ENCODE measurements at regions of chr5 and their contacts with region 1.

Region 1: DNA sequence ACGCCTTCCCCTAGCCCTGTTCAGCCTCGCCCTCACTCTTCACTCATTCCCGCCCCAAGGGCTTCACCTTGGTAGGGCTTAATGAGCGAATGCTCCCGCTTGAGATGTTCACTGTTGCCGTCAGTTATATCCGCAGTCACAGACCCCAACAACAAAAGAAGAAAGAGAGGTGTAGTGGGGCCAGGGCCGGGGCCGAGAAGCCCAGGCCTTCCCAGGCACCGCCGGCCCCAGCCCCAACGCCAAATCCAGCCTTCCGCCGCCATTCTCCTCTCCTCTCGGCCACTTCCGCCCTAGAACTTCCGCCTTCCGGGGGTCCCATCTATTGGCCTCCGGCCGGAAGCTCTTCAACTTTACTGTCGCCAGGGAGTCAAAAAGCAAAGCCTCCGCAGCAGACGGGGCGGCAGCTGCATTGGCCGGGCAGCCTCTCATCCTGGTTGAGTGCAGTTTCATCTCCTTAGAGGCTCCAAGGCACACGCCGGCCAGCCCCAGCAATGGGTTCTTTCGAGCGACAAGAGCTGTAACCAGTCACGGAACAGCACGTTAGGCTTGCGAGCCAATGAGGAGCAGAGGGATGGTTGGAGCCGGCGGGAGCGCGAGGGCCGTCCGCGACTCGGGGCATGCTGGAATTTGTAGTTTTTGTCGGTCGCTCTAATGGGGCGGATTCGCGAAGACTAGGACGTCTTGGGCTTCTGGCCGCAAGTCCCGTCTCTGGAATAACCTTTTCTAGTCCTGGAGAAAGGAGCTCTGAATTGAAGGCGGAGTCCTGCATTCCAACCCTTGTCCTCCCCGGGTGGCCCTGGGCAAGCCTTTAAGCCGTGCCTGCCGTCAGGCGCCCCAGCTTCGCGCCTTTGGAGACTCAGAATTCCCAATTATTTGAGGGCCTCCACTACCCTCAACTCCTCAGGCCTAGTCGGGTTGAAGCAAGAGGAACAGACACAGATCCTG is at the start of gene LMAN2:
- DNase-seq: peak; percentile 93 to 95 (median 94)
- H3K4me3 ChIP-seq: peak within 1 kb of the TSS; percentile 91 to 99
- H3K4me3 Mint-ChIP-seq: peak within 1 kb of the TSS; percentile 91 to 100 (median 97)
- H3K27ac ChIP-seq: peak within 1 kb of the TSS; percentile 93
- H3K27ac Mint-ChIP-seq: peak within 1 kb of the TSS; percentile 97 to 100 (median 99)
- H3K4me1 ChIP-seq: peaks cover 62% of the 10 kb centered on the region
- H3K4me1 Mint-ChIP-seq: peaks cover 42 to 81% (median 63%) of the 10 kb centered on the region in 4 donors
- H3K27me3 ChIP-seq: no peaks in the 10 kb centered on the region
- H3K27me3 Mint-ChIP-seq: no peaks in the 10 kb centered on the region
- total RNA-seq, gene LMAN2: 114 to 123 TPM

Region 2: GRCh38 chr5:177133091-177133852 is 218.4 kb before region 1 on chr5 and contains the start of gene NSD1:
- CTCF ChIA-PET with region 1: no interaction called
- POLR2A ChIA-PET with region 1: interaction called, 8 read pairs
- intact Hi-C with region 1: loop called (anchors 1 kb)
- DNase-seq: peak; percentile 90 to 93 (median 92)
- H3K4me3 ChIP-seq: peak within 1 kb of the TSS; percentile 20 to 67
- H3K4me3 Mint-ChIP-seq: peak within 1 kb of the TSS; percentile 85 to 90 (median 87)
- H3K27ac ChIP-seq: peak within 1 kb of the TSS; percentile 66
- H3K27ac Mint-ChIP-seq: peak within 1 kb of the TSS; percentile 82 to 94 (median 92)
- H3K4me1 ChIP-seq: peaks cover 63% of the 10 kb centered on the region
- H3K4me1 Mint-ChIP-seq: peaks cover 36 to 73% (median 52%) of the 10 kb centered on the region in 4 donors
- H3K27me3 ChIP-seq: no peaks in the 10 kb centered on the region
- H3K27me3 Mint-ChIP-seq: no peaks in the 10 kb centered on the region
- total RNA-seq, gene NSD1: 116 to 122 TPM

Region 3: GRCh38 chr5:177311723-177312648 is 39.7 kb before region 1 on chr5 and contains the start of gene MXD3:
- CTCF ChIA-PET with region 1: interaction called, 11 read pairs
- POLR2A ChIA-PET with region 1: interaction called, 12 read pairs
- intact Hi-C with region 1: loop called (anchors 2 kb)
- DNase-seq: peak; percentile 90 to 96 (median 93)
- H3K4me3 ChIP-seq: peak within 1 kb of the TSS; percentile 24 to 64
- H3K4me3 Mint-ChIP-seq: peak within 1 kb of the TSS; percentile 70 to 86 (median 80)
- H3K27ac ChIP-seq: peak within 1 kb of the TSS; percentile 49
- H3K27ac Mint-ChIP-seq: peak within 1 kb of the TSS; percentile 29 to 83 (median 75)
- H3K4me1 ChIP-seq: peaks cover 41% of the 10 kb centered on the region
- H3K4me1 Mint-ChIP-seq: peaks cover 17 to 49% (median 30%) of the 10 kb centered on the region in 4 donors
- H3K27me3 ChIP-seq: no peaks in the 10 kb centered on the region
- H3K27me3 Mint-ChIP-seq: no peaks in the 10 kb centered on the region
- total RNA-seq, gene MXD3: 17.3 TPM

Region 4: DNA sequence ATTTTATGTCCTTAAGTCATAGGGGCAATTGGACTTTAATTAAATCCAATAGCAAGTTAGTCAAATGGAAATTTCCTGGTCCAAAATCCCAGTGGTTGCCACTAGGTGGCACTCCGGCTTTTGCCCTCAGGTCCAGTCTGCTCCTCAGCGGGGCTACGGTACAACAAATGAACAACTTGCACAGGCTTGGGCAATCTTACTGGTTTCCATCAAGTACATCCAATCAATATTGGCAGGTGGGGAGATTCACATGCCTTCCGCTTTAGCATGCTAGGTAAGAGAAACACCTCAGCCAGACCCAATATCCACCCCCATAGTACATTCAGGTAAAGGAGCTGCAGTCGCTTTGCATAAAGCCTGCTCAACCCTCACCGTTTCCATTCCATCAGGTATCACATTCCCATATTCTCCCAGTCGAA is 33.7 kb before region 1 on chr5:
- CTCF ChIA-PET with region 1: interaction called, 13 read pairs
- POLR2A ChIA-PET with region 1: interaction called, 12 read pairs
- intact Hi-C with region 1: loop called (anchors 2 kb)
- DNase-seq: peak; percentile 68 to 73 (median 69)
- H3K4me3 ChIP-seq: no peak overlapping the region
- H3K4me3 Mint-ChIP-seq: no peak overlapping the region
- H3K27ac ChIP-seq: no peak overlapping the region
- H3K27ac Mint-ChIP-seq: peak overlapping the region in 2 of 7 donors; percentile 10 to 34
- H3K4me1 ChIP-seq: peaks cover 15% of the 10 kb centered on the region
- H3K4me1 Mint-ChIP-seq: peaks cover 8 to 36% (median 20%) of the 10 kb centered on the region in 4 donors
- H3K27me3 ChIP-seq: no peaks in the 10 kb centered on the region
- H3K27me3 Mint-ChIP-seq: no peaks in the 10 kb centered on the region

Region 5: DNA sequence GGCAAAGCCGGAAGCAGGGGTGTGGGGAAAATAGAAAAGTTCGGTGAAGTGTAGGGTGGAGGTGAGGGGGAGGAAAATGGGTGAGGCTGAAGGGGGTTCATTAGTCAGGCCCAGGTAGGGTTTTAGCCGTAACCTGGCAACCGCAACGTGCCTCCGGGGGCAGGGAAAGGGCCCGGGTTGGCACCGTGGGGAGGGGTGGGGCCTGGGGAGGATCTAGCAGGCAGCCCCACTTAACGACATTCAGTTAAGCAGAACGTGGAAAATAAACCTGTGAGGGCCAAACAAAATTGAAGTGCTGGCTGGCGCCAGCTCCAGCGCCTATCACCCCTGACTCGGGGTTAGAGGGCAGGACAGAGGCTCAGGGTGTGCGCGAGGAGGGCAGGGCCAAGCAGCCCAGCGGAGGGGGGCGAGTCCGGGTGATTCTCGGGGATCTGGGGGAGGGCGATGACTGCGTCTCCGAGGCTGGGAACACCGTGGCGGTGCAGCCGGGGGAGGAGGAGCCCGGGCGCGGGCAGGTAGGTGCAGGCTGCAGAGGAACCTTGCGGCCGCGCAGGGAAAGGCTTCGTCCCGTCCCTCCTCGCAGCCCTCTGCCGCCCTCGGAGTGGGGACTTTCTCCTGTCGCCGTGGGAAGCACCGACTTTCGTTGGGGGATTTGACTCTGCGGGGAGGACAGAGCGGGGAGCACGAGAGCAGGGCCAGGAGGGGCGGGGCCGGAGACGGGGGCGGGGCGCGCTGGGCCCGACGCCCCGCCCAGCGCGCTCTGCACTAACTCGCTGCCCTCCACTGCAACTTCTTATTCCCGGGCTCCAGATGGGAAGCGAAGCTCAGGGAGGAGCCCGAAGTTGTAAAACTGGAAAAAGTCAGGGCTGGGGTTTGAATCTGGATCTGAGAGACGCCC is 11.2 kb after region 1 on chr5:
- CTCF ChIA-PET with region 1: interaction called, 90 read pairs
- POLR2A ChIA-PET with region 1: interaction called, 32 read pairs
- intact Hi-C with region 1: no loop called
- DNase-seq: peak; percentile 54 to 86 (median 61)
- H3K4me3 ChIP-seq: peak overlapping the region; percentile 11 to 52
- H3K4me3 Mint-ChIP-seq: peak overlapping the region; percentile 81 to 89 (median 85)
- H3K27ac ChIP-seq: peak overlapping the region; percentile 81
- H3K27ac Mint-ChIP-seq: peak overlapping the region; percentile 86 to 97 (median 92)
- H3K4me1 ChIP-seq: peaks cover 81% of the 10 kb centered on the region
- H3K4me1 Mint-ChIP-seq: peaks cover 40 to 76% (median 59%) of the 10 kb centered on the region in 4 donors
- H3K27me3 ChIP-seq: no peaks in the 10 kb centered on the region
- H3K27me3 Mint-ChIP-seq: no peaks in the 10 kb centered on the region

Region 6: DNA sequence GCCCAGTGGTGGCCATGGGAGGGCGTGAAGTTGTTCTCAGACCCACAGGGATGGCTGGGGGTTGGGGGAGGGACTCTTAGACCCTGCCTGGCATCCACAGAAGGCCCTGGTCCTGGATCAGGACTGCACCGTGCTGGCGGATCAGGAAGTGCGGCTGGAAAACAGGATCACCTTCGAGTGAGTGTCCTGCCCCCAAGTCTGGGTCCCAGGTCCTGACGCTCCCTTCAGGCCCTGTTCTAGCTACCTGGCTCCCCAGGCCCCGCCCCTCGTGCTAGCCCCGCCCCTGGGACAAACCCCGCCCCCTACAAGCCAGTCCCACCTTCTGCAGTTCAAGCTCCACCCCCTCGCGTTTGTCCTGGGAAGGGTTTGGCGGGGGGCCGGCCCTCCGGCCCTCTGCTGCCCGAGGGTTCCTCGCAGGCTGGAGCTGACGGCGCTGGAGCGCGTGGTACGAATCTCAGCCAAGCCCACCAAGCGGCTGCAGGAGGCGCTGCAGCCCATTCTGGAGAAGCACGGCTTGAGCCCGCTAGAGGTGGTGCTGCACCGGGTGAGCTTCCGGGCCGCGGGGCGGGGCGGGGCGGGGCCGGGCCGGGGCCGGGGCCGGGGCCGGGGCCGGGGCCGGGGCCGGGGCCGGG is 18.9 kb after region 1 on chr5:
- CTCF ChIA-PET with region 1: interaction called, 90 read pairs
- POLR2A ChIA-PET with region 1: interaction called, 52 read pairs
- intact Hi-C with region 1: no loop called
- DNase-seq: peak in 3 of 5 donors; percentile 65 to 81 (median 79)
- H3K4me3 ChIP-seq: no peak overlapping the region
- H3K4me3 Mint-ChIP-seq: peak overlapping the region in 5 of 8 donors; percentile 15 to 80 (median 61)
- H3K27ac ChIP-seq: peak overlapping the region; percentile 28
- H3K27ac Mint-ChIP-seq: peak overlapping the region in 4 of 7 donors; percentile 64 to 88 (median 70)
- H3K4me1 ChIP-seq: peaks cover 85% of the 10 kb centered on the region
- H3K4me1 Mint-ChIP-seq: peaks cover 47 to 78% (median 62%) of the 10 kb centered on the region in 4 donors
- H3K27me3 ChIP-seq: no peaks in the 10 kb centered on the region
- H3K27me3 Mint-ChIP-seq: no peaks in the 10 kb centered on the region

Region 7: GRCh38 chr5:177412603-177413233 is 61.1 kb after region 1 on chr5:
- CTCF ChIA-PET with region 1: no interaction called
- POLR2A ChIA-PET with region 1: no interaction called
- intact Hi-C with region 1: no loop called
- DNase-seq: peak in 4 of 5 donors; percentile 59 to 74 (median 65)
- H3K4me3 ChIP-seq: peak overlapping the region; percentile 6 to 37
- H3K4me3 Mint-ChIP-seq: peak overlapping the region; percentile 76 to 84 (median 79)
- H3K27ac ChIP-seq: peak overlapping the region; percentile 47
- H3K27ac Mint-ChIP-seq: peak overlapping the region; percentile 83 to 94 (median 86)
- H3K4me1 ChIP-seq: peaks cover 36% of the 10 kb centered on the region
- H3K4me1 Mint-ChIP-seq: peaks cover 20 to 49% (median 32%) of the 10 kb centered on the region in 4 donors
- H3K27me3 ChIP-seq: no peaks in the 10 kb centered on the region
- H3K27me3 Mint-ChIP-seq: no peaks in the 10 kb centered on the region

Region 8: GRCh38 chr5:177592010-177592834 is 240.6 kb after region 1 on chr5 and contains the start of gene TMED9:
- CTCF ChIA-PET with region 1: no interaction called
- POLR2A ChIA-PET with region 1: no interaction called
- intact Hi-C with region 1: loop called (anchors 2 kb)
- DNase-seq: peak; percentile 88 to 91 (median 90)
- H3K4me3 ChIP-seq: peak within 1 kb of the TSS; percentile 97 to 98
- H3K4me3 Mint-ChIP-seq: peak within 1 kb of the TSS; percentile 96 to 100 (median 99)
- H3K27ac ChIP-seq: peak within 1 kb of the TSS; percentile 74
- H3K27ac Mint-ChIP-seq: peak within 1 kb of the TSS; percentile 91 to 99 (median 98)
- H3K4me1 ChIP-seq: peaks cover 26% of the 10 kb centered on the region
- H3K4me1 Mint-ChIP-seq: peaks cover 15 to 37% (median 26%) of the 10 kb centered on the region in 4 donors
- H3K27me3 ChIP-seq: no peaks in the 10 kb centered on the region
- H3K27me3 Mint-ChIP-seq: peaks cover 13 to 14% of the 10 kb centered on the region in 2 donors
- total RNA-seq, gene TMED9: 93.7 to 95.8 TPM

Measured in CD4-positive, alpha-beta memory T cell (primary cell).